ENCODE measurements at regions of chr1 and their contacts with region 1.

Region 1: GRCh38 chr1:39110325-39110851 is 84.2 kb downstream of the NDUFS5 start:
- DNase-seq: no peak
- H3K4me3 ChIP-seq: no peak overlapping the region
- H3K27ac ChIP-seq: peak overlapping the region; percentile 42
- H3K4me1 ChIP-seq: peaks cover 71% of the 10 kb centered on the region
- H3K27me3 ChIP-seq: no peaks in the 10 kb centered on the region
- CTCF ChIP-seq: no peak
- POLR2A ChIP-seq: no peak

Region 2: GRCh38 chr1:38191461-38191860 is 918.9 kb before region 1 on chr1:
- intact Hi-C with region 1: no loop called
- DNase-seq: no peak
- H3K4me3 ChIP-seq: no peak overlapping the region
- H3K27ac ChIP-seq: no peak overlapping the region
- H3K4me1 ChIP-seq: no peaks in the 10 kb centered on the region
- H3K27me3 ChIP-seq: no peaks in the 10 kb centered on the region
- CTCF ChIP-seq: no peak
- POLR2A ChIP-seq: no peak

Region 3: DNA sequence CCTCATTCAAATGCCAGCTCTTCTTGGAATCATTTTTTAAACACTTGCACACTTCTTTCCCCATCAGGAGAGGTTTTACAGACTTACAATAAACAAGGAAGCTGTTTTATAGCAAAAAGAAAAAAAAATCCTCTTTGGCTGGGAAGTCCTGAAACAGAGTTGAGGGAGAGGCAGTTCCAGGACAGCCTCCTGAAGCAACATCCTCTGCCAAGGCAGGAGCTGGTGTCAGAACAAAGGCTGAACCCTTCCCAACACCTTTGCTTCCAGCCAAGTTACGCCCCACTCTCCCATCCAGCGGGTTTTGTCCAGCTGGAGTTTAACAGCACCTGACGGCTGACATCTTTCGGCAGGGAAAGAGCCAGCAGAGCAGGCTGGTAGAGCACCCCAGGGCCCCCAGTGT is 538.7 kb before region 1 on chr1:
- intact Hi-C with region 1: no loop called
- DNase-seq: no peak
- H3K4me3 ChIP-seq: no peak overlapping the region
- H3K27ac ChIP-seq: no peak overlapping the region
- H3K4me1 ChIP-seq: peaks cover 22% of the 10 kb centered on the region
- H3K27me3 ChIP-seq: no peaks in the 10 kb centered on the region
- CTCF ChIP-seq: no peak
- POLR2A ChIP-seq: no peak

Region 4: DNA sequence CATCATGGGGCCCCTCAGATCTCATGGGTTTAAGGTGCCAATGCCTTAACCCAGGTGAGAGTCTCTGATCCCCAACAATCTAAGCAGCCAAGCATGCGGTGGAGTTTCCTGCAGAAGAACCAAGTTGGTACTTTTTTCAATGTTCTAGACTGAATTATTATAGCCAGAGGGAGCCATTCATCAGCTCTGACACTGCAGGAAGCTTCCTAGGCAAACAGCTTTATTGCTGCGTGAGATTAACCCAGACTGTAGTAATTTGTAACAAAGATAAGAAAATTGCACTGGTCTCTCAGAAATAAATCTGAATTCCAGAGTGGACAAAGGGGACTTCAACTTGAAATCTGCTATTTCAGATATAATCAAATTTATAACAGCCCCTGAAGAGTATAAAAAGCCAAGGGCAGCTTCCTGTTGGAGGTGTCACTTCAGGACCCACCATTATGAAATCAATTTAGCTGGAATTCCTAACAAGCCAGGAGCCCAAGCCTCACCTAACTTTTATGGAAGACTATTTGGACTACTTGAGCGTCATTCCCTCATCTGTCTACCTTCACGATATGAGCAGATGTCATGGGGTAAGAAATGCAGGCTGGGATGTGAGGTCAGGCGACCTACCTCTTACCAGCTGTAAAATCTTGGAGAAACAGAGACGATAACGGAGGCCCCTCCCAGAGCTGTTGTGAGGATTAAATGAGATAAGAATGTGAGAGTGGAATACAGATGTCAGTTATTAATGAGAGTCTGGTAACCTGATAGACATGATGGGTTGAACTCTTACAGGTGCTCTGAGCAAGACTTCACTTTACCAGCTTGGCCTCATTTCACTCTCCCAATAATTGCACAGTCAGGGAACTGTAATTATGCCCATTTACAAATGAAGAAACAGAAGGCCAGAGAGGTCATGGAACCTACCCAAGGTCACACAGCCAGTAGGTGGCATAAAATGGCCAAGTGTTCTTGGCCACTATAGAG is 385.9 kb before region 1 on chr1:
- intact Hi-C with region 1: no loop called
- DNase-seq: no peak
- H3K4me3 ChIP-seq: no peak overlapping the region
- H3K27ac ChIP-seq: no peak overlapping the region
- H3K4me1 ChIP-seq: peaks cover 23% of the 10 kb centered on the region
- H3K27me3 ChIP-seq: no peaks in the 10 kb centered on the region
- CTCF ChIP-seq: no peak
- POLR2A ChIP-seq: no peak

Region 5: DNA sequence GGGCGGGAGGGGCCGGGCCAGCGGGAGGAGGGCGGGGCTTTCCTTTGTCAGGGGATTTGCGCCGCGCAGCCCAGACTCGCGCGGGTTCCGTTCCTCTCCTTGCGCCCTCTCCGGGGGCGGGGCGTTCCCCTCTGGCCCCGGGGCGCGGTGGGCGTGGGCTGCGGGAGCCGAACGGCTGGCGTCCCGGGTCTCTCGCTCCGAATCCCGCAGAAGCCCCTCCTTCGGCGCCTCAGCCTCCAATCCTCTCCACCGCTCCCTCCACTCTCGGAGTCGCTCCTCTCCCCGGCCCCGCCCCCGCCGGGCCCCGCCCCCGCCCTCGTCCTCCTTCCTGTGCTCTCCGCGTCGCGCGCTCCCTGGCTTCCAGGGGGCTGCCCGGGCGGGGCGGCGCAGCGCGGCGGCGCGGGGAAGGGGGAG is 298.3 kb after region 1 on chr1:
- intact Hi-C with region 1: loop called (anchors 10 kb)
- DNase-seq: peak in 1 of 2 donors; percentile 93
- H3K4me3 ChIP-seq: peak overlapping the region; percentile 61 to 74
- H3K27ac ChIP-seq: peak overlapping the region; percentile 89
- H3K4me1 ChIP-seq: peaks cover 69% of the 10 kb centered on the region
- H3K27me3 ChIP-seq: no peaks in the 10 kb centered on the region
- CTCF ChIP-seq: no peak
- POLR2A ChIP-seq: no peak

Measured in vagina (tissue), 2 donors.